ENCODE measurements at regions of chr14 and their contacts with region 1.

Region 1: DNA sequence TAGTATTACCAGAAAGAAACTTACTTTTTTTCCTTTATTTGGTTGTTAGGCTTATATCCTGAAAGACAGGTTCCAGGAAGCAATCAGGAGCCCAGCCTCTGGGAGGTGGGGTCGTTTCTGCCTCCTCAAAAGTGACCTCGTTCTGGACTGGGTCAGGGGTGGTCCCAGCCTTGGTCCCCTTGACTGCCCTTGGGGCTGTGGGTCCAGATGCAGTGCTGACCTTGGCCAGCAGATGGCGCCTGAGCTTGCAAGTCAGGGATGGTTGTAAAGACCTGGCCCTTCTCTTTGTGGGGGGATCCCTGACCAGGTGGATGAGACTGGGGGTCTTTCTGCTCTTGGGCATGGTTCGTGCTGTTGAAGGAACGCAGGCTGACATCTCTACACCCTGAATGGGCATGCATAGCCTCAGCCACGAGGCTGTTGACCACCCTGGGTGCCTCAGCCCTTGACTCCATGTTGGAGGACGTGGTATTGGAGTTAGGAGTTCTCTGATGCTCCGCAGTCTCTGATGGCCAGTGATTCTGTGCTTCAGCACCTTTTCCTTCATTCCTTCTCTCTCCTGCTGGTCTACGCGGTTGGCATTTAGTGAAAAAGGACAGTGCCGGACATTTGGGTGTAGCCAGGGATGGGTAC is 62.4 kb downstream of the ADCK1 start:
- DNase-seq: peak; percentile 89

Region 2: GRCh38 chr14:78157494-78158456 is 295.5 kb after region 1 on chr14:
- intact Hi-C with region 1: loop called (anchors 10 kb)
- DNase-seq: no peak

Region 3: GRCh38 chr14:78823035-78823434 is 960.8 kb after region 1 on chr14:
- intact Hi-C with region 1: no loop called
- DNase-seq: no peak

Measured in cardiac septum (tissue), 1 donor.